MCF 10A (cell line): ENCODE measurements at regions of chr1 and their contacts with region 1.

Region 1: GRCh38 chr1:161292631-161293030 is 17.1 kb downstream of the MPZ start:
- DNase-seq: no peak
- H3K4me3 Mint-ChIP-seq: no peak overlapping the region
- H3K27ac Mint-ChIP-seq: no peak overlapping the region
- H3K4me1 Mint-ChIP-seq: no peaks in the 10 kb centered on the region
- H3K27me3 Mint-ChIP-seq: peaks cover 13% of the 10 kb centered on the region
- CTCF ChIP-seq: no peak

Region 2: GRCh38 chr1:160800645-160801408 is 491.8 kb before region 1 on chr1:
- CTCF ChIA-PET with region 1: no interaction called
- POLR2A ChIA-PET with region 1: no interaction called
- intact Hi-C with region 1: no loop called
- DNase-seq: no peak
- H3K4me3 Mint-ChIP-seq: no peak overlapping the region
- H3K27ac Mint-ChIP-seq: no peak overlapping the region
- H3K4me1 Mint-ChIP-seq: no peaks in the 10 kb centered on the region
- H3K27me3 Mint-ChIP-seq: no peaks in the 10 kb centered on the region
- CTCF ChIP-seq: no peak

Region 3: DNA sequence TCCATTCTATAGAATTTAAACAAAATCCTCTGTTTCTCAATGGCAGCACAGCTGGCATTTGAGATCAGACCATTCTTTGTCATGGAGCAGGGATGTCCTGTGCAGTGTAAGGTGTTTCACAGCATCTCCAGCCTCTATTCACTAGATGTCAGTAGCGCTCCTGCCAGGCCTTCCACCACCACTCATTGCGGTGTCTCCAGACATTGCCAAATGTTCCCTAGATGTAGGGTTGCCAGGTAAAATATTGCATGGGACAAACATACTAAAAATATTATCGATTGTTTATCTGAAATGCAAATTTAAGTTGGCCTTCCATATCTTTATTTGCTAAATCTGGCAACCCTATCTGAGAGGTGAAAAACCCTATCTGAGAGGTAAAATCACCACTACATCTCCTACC is 349.7 kb before region 1 on chr1:
- CTCF ChIA-PET with region 1: no interaction called
- POLR2A ChIA-PET with region 1: no interaction called
- intact Hi-C with region 1: no loop called
- DNase-seq: peak; percentile 54
- H3K4me3 Mint-ChIP-seq: no peak overlapping the region
- H3K27ac Mint-ChIP-seq: no peak overlapping the region
- H3K4me1 Mint-ChIP-seq: peaks cover 11% of the 10 kb centered on the region
- H3K27me3 Mint-ChIP-seq: peaks cover 30% of the 10 kb centered on the region
- CTCF ChIP-seq: peak; percentile 48

Region 4: DNA sequence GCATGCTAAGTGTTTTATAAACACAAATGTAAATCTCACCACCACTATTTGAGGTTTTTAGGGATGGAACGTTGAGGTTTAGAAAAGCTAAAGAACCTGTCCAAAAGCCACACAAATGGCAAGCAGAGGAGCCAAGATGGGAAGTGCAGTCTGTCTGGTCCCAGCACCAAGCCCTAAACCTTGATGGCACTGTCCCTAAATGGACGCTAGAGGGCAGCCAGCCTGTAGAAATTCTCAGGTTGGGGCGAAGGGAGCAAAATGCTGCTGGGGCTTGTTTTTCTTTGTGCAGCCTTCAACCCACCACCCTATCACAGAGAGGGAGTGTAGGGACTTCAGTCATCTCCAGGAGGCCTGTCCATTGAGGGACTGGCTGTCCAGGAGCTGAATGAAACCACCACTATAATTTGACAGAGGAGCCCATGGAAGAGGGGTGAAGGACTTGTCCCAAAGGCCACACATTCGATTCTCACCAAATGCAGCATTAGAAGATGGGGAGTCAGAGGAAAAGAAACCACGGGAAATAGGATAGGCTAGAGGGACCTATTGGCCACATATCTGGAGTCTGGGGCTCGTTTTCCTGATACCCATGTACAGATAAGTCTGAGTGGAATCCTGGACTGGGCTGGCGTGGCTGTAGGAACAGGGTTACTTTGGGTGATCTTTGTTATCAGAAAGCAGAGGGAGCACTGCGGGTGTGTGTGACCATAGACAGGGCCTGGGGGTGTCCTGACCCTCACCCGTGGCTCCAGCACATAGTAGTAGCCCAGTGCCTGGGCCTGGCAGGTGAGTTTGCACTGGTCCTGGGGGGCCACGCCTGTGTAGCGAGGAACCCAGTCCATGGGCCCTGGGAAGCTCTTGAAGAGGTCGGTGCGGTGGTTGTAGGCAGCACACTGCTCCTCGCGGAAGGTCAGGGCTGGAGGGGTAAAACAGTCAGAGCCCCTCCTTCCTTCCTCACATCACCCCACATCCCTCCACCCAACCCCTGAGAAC is 99.9 kb before region 1 on chr1:
- CTCF ChIA-PET with region 1: interaction called, 41 read pairs
- POLR2A ChIA-PET with region 1: no interaction called
- intact Hi-C with region 1: no loop called
- DNase-seq: peak; percentile 88
- H3K4me3 Mint-ChIP-seq: no peak overlapping the region
- H3K27ac Mint-ChIP-seq: peak overlapping the region; percentile 71
- H3K4me1 Mint-ChIP-seq: peaks cover 20% of the 10 kb centered on the region
- H3K27me3 Mint-ChIP-seq: no peaks in the 10 kb centered on the region
- CTCF ChIP-seq: peak; percentile 92

Region 5: DNA sequence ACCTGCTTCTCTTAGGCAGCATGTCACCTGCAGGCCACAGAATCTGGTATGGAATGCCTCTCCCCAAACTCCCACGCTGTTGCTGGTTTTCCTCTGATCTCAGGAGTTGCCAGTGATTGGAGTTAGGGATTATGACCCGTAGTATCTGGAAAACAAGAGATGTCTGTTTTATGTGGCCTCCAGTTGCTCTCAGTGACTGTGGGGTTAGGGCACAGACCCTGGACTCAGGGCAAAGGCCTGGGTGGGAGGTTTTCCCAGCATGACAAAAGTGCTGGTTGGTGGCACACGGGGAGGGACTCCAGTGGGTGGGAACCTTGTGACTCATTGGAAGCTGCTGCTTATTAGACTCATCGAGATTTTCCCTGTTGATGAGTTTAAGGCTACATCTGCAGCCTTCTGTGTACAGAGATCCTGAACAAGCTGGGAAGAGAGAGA is 54.6 kb before region 1 on chr1 and contains the start of gene NR1I3:
- CTCF ChIA-PET with region 1: interaction called, 17 read pairs
- POLR2A ChIA-PET with region 1: interaction called, 3 read pairs
- intact Hi-C with region 1: no loop called
- DNase-seq: no peak
- H3K4me3 Mint-ChIP-seq: no peak within 1 kb of the TSS
- H3K27ac Mint-ChIP-seq: no peak within 1 kb of the TSS
- H3K4me1 Mint-ChIP-seq: peaks cover 11% of the 10 kb centered on the region
- H3K27me3 Mint-ChIP-seq: no peaks in the 10 kb centered on the region
- CTCF ChIP-seq: no peak
- total RNA-seq, gene NR1I3: not detected in 2 replicates

Region 6: DNA sequence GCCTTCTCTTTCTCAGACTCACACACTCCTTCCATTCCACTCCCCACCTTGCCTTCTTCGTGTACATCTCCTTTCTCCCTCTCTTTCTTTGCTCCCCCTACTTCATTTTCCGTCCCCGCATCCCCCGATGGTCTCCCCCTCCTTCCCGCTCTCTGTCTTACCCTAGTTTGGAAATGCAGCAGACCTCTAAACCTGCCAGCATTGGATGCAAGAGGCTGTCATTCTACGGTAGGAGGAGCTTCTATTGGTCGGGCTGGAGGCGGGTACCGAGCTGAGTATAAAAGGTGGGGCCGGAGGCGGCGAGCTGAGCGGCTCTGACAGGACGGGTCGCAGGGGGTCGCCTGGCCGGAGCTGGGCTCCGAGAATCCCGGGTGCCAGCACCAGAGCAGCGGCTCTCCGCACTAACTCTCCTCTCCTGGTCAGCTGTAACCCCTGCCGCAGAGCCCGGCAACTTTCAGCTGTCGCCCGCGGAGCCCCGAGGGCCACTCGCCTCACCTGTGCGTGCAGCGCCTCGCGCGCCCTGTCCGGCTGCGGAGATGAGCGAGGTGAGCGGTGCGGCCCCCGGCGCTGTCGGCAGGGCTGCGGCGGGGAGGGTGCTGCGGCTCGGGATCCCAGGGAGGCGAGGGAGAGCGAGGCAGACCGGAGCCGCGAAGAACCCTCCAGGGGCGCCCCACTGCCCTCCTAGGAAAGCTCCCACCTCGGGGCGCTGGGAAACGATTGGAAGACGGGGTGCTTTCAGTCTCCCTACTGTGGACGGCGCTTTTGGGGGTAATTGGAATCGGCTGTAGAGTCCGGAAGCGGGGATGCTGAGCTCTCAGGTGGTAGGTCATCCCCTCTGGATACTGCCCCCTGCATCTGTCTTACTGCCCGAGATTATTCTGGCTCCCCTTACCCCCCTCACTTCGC is 33.9 kb before region 1 on chr1 and contains the start of gene PCP4L1:
- CTCF ChIA-PET with region 1: interaction called, 21 read pairs
- POLR2A ChIA-PET with region 1: no interaction called
- intact Hi-C with region 1: no loop called
- DNase-seq: peak; percentile 56
- H3K4me3 Mint-ChIP-seq: peak within 1 kb of the TSS; percentile 50
- H3K27ac Mint-ChIP-seq: no peak within 1 kb of the TSS
- H3K4me1 Mint-ChIP-seq: no peaks in the 10 kb centered on the region
- H3K27me3 Mint-ChIP-seq: peaks cover 50% of the 10 kb centered on the region
- CTCF ChIP-seq: no peak
- total RNA-seq, gene PCP4L1: not detected in 2 replicates

Region 7: DNA sequence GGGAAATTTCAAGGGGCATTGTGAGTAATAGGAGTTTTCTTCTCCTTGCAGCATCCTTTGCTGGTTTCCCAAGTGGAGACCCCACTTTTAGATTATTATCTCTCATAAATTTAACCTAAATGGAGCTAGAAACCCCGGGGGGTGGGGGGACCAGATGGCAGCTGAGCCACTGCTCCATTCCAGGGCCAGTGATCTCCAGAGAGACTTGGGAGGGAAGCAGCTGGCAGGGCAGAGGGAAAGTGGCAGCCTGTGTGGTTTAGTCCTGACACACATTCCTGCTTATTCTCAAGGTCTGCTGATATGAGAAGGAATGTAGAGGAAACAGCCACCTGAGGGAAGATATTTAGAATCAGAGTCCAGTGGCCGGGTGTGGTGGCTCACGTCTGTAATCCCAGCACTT is 17.8 kb before region 1 on chr1:
- CTCF ChIA-PET with region 1: interaction called, 17 read pairs
- POLR2A ChIA-PET with region 1: interaction called, 3 read pairs
- intact Hi-C with region 1: no loop called
- DNase-seq: no peak
- H3K4me3 Mint-ChIP-seq: no peak overlapping the region
- H3K27ac Mint-ChIP-seq: no peak overlapping the region
- H3K4me1 Mint-ChIP-seq: no peaks in the 10 kb centered on the region
- H3K27me3 Mint-ChIP-seq: peaks cover 58% of the 10 kb centered on the region
- CTCF ChIP-seq: no peak

Region 8: DNA sequence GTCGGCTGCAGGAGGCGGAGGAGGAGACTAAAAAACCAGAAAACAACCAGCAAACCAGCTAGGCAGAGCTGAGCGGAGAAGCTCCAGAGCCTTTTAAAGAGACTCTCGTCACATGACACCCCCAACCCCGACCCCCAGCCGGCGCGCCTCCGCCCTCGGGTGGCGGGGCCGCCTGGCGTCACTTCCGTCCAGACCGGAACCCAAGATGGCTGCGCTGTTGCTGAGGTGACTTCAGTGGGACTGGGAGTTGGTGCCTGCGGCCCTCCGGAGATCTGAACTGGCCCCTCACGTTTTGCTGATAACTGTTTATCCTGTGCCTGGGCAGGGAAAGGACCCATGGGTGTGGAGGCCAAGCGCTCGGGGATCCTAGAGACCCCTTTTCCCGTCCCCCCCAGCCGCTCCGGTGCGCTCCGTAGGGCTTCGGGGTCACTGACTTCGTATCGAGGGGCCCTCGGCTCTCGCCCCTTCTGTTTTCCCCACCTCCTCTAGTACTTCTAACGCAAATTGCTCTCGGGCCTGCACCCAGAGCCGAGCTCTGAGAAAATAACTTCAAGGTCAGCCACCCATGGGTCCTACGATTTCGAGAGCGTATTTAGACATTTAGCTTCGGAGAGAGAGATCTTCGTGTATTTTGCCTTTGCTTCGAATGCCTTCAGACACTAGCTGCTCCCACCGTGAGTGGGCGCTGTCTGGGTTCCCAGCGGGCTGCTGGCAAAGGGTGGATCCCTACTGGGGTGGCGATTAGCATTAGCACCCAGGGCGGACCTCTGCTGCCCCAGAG is 21.8 kb after region 1 on chr1 and contains the start of gene SDHC:
- CTCF ChIA-PET with region 1: interaction called, 12 read pairs
- POLR2A ChIA-PET with region 1: interaction called, 19 read pairs
- intact Hi-C with region 1: no loop called
- DNase-seq: peak; percentile 87
- H3K4me3 Mint-ChIP-seq: peak within 1 kb of the TSS; percentile 97
- H3K27ac Mint-ChIP-seq: peak within 1 kb of the TSS; percentile 100
- H3K4me1 Mint-ChIP-seq: peaks cover 13% of the 10 kb centered on the region
- H3K27me3 Mint-ChIP-seq: no peaks in the 10 kb centered on the region
- CTCF ChIP-seq: peak; percentile 35
- total RNA-seq, gene SDHC: 204 and 224 TPM in 2 replicates

Region 9: DNA sequence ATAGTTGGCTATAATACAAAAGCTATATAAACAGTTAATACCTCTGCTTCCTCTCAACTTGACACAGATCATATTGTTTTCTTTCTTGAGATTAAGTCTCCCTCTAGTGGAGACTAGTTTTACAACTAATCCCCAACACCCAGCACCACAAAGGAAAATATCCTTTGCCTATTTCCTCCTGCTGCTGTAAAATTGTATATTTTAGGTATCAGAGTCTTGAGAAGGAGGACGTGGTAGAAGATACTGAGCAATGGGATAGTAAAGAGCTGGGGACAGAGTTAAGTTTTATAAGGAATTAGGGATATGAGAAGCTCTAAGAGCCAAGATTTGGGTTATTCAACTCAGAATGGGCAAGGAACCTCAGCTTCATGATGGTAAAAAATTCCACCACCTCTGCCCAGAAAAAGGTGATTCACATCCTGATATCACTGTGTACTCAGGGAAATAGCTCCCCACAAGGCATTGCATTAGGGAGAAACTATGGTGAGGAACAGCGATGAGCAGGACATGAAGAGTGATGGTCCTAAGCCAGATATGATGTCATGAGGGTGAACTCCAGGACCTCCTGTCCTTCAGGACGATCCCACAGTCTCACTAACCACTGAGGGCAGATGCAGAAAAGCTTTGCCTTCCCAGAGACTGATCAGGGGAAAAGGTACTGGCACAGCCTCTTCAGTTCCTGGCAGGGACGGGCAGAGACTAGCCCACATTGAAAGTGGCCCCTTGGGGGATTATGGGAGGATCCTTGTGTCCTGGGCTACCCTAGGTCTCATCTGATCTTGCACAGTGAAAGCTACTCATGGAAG is 89.8 kb after region 1 on chr1:
- CTCF ChIA-PET with region 1: interaction called, 51 read pairs
- POLR2A ChIA-PET with region 1: no interaction called
- intact Hi-C with region 1: no loop called
- DNase-seq: peak; percentile 78
- H3K4me3 Mint-ChIP-seq: peak overlapping the region; percentile 11
- H3K27ac Mint-ChIP-seq: peak overlapping the region; percentile 37
- H3K4me1 Mint-ChIP-seq: peaks cover 22% of the 10 kb centered on the region
- H3K27me3 Mint-ChIP-seq: no peaks in the 10 kb centered on the region
- CTCF ChIP-seq: peak; percentile 68

Region 10: GRCh38 chr1:161740921-161741320 is 448.3 kb after region 1 on chr1:
- CTCF ChIA-PET with region 1: no interaction called
- POLR2A ChIA-PET with region 1: no interaction called
- intact Hi-C with region 1: no loop called
- DNase-seq: no peak
- H3K4me3 Mint-ChIP-seq: no peak overlapping the region
- H3K27ac Mint-ChIP-seq: no peak overlapping the region
- H3K4me1 Mint-ChIP-seq: peaks cover 37% of the 10 kb centered on the region
- H3K27me3 Mint-ChIP-seq: no peaks in the 10 kb centered on the region
- CTCF ChIP-seq: no peak

Region 11: DNA sequence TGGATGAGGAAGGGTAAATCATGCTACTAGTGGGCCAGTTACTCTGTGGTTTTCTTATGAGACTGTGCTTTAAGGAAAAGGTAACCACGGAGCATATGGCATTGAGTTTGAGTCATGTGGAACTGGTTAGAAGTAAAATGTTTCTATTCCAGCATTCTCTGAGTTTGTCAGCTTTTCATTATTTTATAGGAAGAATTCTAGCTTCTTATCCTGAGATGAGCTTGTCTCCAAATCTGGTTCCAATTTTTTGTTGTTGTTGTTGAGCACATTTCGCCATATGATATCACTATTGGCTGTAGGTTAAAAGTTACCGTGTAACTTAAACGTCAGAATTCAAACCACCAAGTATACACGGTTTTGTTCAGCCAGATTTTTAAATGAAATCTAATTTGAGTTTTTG is 543.4 kb after region 1 on chr1:
- CTCF ChIA-PET with region 1: no interaction called
- POLR2A ChIA-PET with region 1: no interaction called
- intact Hi-C with region 1: no loop called
- DNase-seq: no peak
- H3K4me3 Mint-ChIP-seq: no peak overlapping the region
- H3K27ac Mint-ChIP-seq: no peak overlapping the region
- H3K4me1 Mint-ChIP-seq: no peaks in the 10 kb centered on the region
- H3K27me3 Mint-ChIP-seq: no peaks in the 10 kb centered on the region
- CTCF ChIP-seq: no peak